Activated CD4-positive, alpha-beta T cell treated with anti-CD3 and anti-CD28 coated beads for 36 hours (primary cell): ENCODE measurements at regions of chr5 and their contacts with region 1.

Region 1: DNA sequence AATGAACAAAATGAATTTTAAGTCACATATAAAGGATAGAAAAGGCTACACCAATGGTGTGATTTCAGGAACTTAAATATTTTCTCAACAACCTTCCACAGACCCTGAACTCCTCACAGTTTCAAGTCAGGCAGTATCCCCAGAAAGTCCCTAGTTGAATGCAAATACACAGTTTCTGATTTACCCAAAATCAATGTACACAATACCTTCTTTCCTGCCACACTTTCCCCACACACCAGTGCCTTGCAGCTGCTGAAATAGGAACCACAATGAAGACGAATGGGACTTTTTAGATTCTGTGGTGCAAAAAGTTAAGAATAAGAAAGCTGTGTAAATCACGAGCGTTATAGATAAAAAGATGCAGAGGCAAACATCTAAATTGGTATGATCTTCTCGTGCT is 552.4 kb upstream of the MEF2C start:
- DNase-seq: no peak
- ATAC-seq: no peak
- H3K4me3 Mint-ChIP-seq: no peak overlapping the region
- H3K27ac Mint-ChIP-seq: no peak overlapping the region
- H3K4me1 Mint-ChIP-seq: no peaks in the 10 kb centered on the region
- H3K27me3 Mint-ChIP-seq: no peaks in the 10 kb centered on the region

Region 2: DNA sequence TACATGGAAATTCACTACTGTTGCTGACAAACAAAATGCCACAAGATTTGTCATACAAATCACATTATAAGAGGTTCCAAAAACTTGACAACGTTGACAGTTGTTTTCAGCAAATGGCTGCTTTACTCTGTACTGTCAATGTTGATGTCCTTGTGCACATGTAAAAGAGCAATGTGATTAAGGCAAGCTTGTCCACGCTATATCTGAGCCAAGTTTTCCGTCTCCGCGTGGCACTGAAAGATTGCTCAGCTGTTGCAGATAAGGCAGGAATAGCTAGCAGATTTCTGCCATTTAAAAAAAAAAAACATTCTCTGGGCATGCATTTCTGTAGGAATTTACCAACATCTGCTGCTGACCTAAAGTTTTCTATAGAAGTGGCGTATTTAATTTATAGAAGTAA is 506.0 kb before region 1 on chr5:
- CTCF ChIA-PET with region 1: no interaction called
- POLR2A ChIA-PET with region 1: interaction called, 11 read pairs
- intact Hi-C with region 1: no loop called
- DNase-seq: no peak
- ATAC-seq: no peak
- H3K4me3 Mint-ChIP-seq: no peak overlapping the region
- H3K27ac Mint-ChIP-seq: no peak overlapping the region
- H3K4me1 Mint-ChIP-seq: no peaks in the 10 kb centered on the region
- H3K27me3 Mint-ChIP-seq: peaks cover 7% of the 10 kb centered on the region